Heart right ventricle (tissue), 16 donors: ENCODE measurements at regions of chr7 and their contacts with region 1.

Region 1: DNA sequence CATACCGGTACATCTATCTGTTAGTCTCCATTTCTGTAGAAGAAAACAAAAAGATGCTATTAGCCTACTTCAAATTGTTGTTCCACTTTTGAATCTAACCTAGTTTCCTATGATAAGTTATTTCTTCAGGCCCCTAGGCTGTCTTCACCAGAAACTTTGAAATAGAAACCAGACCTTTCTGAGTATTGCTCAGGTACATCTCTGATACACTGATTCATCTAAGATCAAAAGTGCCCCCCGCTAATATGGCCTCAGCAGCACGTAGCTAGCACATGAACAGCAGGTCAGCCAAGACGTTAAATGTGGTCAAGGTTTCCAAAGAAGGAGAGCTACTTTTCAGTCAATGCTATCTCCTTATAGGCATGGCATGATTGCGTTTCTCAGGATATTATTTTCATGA is 23.6 kb downstream of the CTAGE6 start:
- DNase-seq: no peak
- ATAC-seq: no peak
- H3K4me3 ChIP-seq: no peak overlapping the region
- H3K27ac ChIP-seq: no peak overlapping the region
- H3K4me1 ChIP-seq: peaks cover 0 to 3% (median 0%) of the 10 kb centered on the region in 9 donors
- H3K27me3 ChIP-seq: no peaks in the 10 kb centered on the region
- CTCF ChIP-seq: no peak

Region 2: GRCh38 chr7:142568435-142569097 is 1165.3 kb before region 1 on chr7:
- intact Hi-C with region 1: no loop called
- DNase-seq: no peak
- ATAC-seq: no peak
- H3K4me3 ChIP-seq: no peak overlapping the region
- H3K27ac ChIP-seq: no peak overlapping the region
- H3K4me1 ChIP-seq: peaks cover 0 to 11% (median 0%) of the 10 kb centered on the region in 9 donors
- H3K27me3 ChIP-seq: peaks cover 0 to 26% (median 4%) of the 10 kb centered on the region in 7 donors
- CTCF ChIP-seq: no peak

Region 3: GRCh38 chr7:143380255-143380645 is 353.6 kb before region 1 on chr7:
- intact Hi-C with region 1: no loop called
- DNase-seq: peak; percentile 89 to 91
- ATAC-seq: peak; percentile 60 to 88 (median 76)
- H3K4me3 ChIP-seq: peak overlapping the region; percentile 79 to 100 (median 96)
- H3K27ac ChIP-seq: peak overlapping the region; percentile 97 to 100 (median 100)
- H3K4me1 ChIP-seq: peaks cover 8 to 82% (median 45%) of the 10 kb centered on the region in 9 donors
- H3K27me3 ChIP-seq: no peaks in the 10 kb centered on the region
- CTCF ChIP-seq: peak; percentile 85 to 95 (median 92)

Region 4: GRCh38 chr7:144027070-144027469 is 293.2 kb after region 1 on chr7:
- intact Hi-C with region 1: loop called in 1 of 10 experiments (anchors 5 kb)
- DNase-seq: no peak
- ATAC-seq: peak in 4 of 8 donors; percentile 46 to 57 (median 53)
- H3K4me3 ChIP-seq: no peak overlapping the region
- H3K27ac ChIP-seq: no peak overlapping the region
- H3K4me1 ChIP-seq: no peaks in the 10 kb centered on the region
- H3K27me3 ChIP-seq: peaks cover 0 to 4% (median 0%) of the 10 kb centered on the region in 7 donors
- CTCF ChIP-seq: peak; percentile 30 to 73 (median 56)